ENCODE measurements at regions of chr9 and their contacts with region 1.

Region 1: GRCh38 chr9:114385412-114386181 is 2.2 kb downstream of the AKNA start:
- DNase-seq: peak; percentile 69 to 97 (median 90)
- ATAC-seq: peak; percentile 80 to 84 (median 82)
- H3K4me3 ChIP-seq: peak overlapping the region; percentile 93 to 97
- H3K4me3 Mint-ChIP-seq: peak overlapping the region; percentile 95 to 100 (median 96)
- H3K27ac ChIP-seq: peak overlapping the region; percentile 93
- H3K27ac Mint-ChIP-seq: peak overlapping the region; percentile 99
- H3K4me1 ChIP-seq: peaks cover 54 to 78% of the 10 kb centered on the region in 2 experiments
- H3K4me1 Mint-ChIP-seq: peaks cover 71 to 87% (median 74%) of the 10 kb centered on the region in 3 donors
- H3K27me3 ChIP-seq: no peaks in the 10 kb centered on the region
- H3K27me3 Mint-ChIP-seq: no peaks in the 10 kb centered on the region

Region 2: GRCh38 chr9:114366334-114367128 is 19.1 kb before region 1 on chr9:
- CTCF ChIA-PET with region 1: interaction called, 5 to 40 read pairs
- POLR2A ChIA-PET with region 1: interaction called, 10 to 34 read pairs
- DNase-seq: peak in 25 of 35 experiments; percentile 39 to 84 (median 54)
- ATAC-seq: peak; percentile 60 to 82 (median 63)
- H3K4me3 ChIP-seq: no peak overlapping the region
- H3K4me3 Mint-ChIP-seq: peak overlapping the region; percentile 53 to 77 (median 59)
- H3K27ac ChIP-seq: peak overlapping the region; percentile 96
- H3K27ac Mint-ChIP-seq: peak overlapping the region; percentile 93 to 97
- H3K4me1 ChIP-seq: peaks cover 78 to 95% of the 10 kb centered on the region in 2 experiments
- H3K4me1 Mint-ChIP-seq: peaks cover 82 to 94% (median 89%) of the 10 kb centered on the region in 3 donors
- H3K27me3 ChIP-seq: no peaks in the 10 kb centered on the region
- H3K27me3 Mint-ChIP-seq: no peaks in the 10 kb centered on the region

Region 3: DNA sequence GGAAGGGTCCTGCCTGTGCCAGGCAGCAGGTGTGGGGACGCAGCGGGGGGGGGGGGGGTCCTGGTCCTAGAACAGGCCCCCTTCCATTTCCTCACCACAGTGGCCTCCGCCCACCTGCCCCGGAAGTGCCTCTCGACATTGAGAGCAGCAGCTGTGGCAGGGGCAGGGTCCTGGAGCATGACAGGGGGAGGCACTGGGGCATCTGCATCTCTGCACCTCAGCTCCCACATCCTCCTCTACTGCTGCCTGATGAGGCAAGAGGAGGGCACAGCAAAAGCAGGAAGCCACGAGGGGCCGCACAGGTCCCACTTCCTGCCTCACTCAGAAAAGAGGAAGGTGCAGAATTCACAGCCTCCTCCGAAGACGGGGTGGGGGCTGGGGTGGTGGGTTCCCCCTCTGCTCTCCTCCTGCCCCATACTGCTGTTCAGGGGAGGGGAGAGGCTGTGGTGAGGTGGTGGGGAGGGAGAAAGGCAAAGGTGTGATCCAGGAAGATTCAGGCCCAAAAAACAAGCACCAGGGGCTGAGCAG is 12.6 kb before region 1 on chr9:
- CTCF ChIA-PET with region 1: interaction called, 6 to 40 read pairs
- POLR2A ChIA-PET with region 1: interaction called, 6 to 34 read pairs
- DNase-seq: peak; percentile 68 to 96 (median 89)
- ATAC-seq: peak; percentile 90 to 93 (median 91)
- H3K4me3 ChIP-seq: peak overlapping the region in 1 of 2 donors; percentile 38
- H3K4me3 Mint-ChIP-seq: peak overlapping the region; percentile 74 to 79 (median 75)
- H3K27ac ChIP-seq: peak overlapping the region; percentile 96
- H3K27ac Mint-ChIP-seq: peak overlapping the region; percentile 86 to 96
- H3K4me1 ChIP-seq: peaks cover 84 to 99% of the 10 kb centered on the region in 2 experiments
- H3K4me1 Mint-ChIP-seq: peaks cover 88 to 93% (median 92%) of the 10 kb centered on the region in 3 donors
- H3K27me3 ChIP-seq: no peaks in the 10 kb centered on the region
- H3K27me3 Mint-ChIP-seq: no peaks in the 10 kb centered on the region

Region 4: DNA sequence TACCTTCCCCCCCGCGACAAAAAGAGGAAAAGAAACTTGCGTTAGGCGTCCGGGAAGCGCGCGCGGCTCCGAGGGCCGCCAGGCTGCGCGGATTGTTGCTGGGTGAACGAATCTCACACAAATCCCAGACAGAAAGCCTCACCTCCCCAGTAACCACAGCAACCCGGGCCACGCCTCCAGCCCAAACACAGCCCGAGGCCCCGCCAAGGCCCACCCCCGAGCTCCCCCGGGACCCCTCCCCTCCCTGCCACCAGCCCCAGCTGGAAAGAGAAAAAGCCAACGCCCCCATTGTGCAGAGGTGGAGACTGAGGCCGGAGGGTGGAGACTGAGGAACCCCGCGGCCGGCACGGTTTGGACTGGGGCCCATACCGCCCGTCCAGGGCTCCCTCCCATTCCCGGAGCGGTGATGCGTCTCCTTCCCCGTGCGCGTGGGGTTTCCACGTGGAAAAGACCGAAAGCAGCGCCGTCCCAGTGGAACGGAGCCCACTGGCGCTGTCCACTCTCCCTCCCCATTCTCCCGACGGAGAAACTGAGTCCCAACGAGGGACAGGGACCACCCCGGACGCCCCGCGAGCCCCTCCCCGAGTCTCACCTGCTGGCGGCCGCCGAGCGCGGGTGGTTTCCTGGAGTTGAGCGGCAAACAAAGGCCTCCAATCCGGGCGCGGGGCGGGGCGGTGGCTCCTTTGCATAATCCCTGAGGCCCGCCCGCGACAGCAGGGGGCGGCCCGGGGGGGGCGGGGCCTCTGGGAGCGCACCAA is 12.4 kb after region 1 on chr9:
- CTCF ChIA-PET with region 1: interaction called, 6 to 8 read pairs
- POLR2A ChIA-PET with region 1: interaction called, 18 to 42 read pairs
- DNase-seq: peak; percentile 86 to 98 (median 95)
- ATAC-seq: peak; percentile 87 to 93 (median 91)
- H3K4me3 ChIP-seq: peak overlapping the region; percentile 85 to 87
- H3K4me3 Mint-ChIP-seq: peak overlapping the region; percentile 92 to 100 (median 95)
- H3K27ac ChIP-seq: peak overlapping the region; percentile 90
- H3K27ac Mint-ChIP-seq: peak overlapping the region; percentile 92 to 97
- H3K4me1 ChIP-seq: peaks cover 25 to 49% of the 10 kb centered on the region in 2 experiments
- H3K4me1 Mint-ChIP-seq: peaks cover 44 to 49% (median 47%) of the 10 kb centered on the region in 3 donors
- H3K27me3 ChIP-seq: no peaks in the 10 kb centered on the region
- H3K27me3 Mint-ChIP-seq: no peaks in the 10 kb centered on the region

Region 5: DNA sequence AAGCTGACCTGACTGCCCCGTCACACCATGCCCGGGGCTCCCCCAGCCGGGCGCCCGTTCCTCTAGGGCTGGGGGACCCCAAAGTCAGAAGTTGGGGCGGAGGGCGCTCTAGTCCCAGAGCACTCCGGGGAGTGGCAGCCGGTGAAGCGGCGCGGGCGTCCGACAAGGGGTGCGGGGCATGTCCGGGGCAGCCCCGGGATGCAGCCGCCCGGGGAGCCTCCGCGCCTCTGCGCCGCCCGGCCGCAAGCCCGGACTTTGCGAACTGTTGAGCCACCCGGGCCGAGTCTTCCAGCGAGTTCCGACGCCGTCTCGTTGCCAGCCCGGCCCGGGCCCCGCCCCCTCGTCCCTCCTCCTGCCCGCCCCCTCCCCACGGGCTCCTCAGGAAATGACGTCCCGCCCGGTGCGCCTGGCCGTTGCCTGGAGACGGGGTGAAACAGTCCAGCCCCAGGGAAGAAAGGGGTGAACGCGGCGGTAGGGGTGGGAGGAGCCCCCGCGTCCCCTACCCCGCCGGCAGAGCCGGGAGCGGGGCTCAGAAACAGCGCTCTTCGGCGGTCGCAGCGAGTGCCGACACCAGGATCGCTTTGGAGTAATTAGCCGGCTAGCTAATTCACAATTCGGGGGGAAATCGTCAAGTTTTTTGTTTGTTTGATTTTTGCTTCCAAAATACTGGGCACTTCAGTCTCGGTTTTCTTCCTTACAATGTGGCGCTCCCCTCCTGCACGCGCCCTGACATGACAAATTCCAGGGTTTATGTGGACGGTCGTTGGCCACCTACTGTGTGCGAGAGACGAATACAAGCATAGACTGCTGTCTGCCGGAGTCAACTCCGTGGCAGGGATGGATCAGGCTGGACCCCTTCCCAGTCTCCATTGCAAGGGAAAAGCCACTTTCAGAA is 119.8 kb after region 1 on chr9 and contains the start of gene WHRN:
- CTCF ChIA-PET with region 1: interaction called in 1 of 2 experiments, 3 read pairs
- POLR2A ChIA-PET with region 1: interaction called in 1 of 2 experiments, 12 read pairs
- DNase-seq: peak; percentile 63 to 95 (median 88)
- ATAC-seq: peak; percentile 83 to 92 (median 86)
- H3K4me3 ChIP-seq: peak within 1 kb of the TSS; percentile 65 to 71
- H3K4me3 Mint-ChIP-seq: peak within 1 kb of the TSS; percentile 79 to 85 (median 80)
- H3K27ac ChIP-seq: peak within 1 kb of the TSS; percentile 55
- H3K27ac Mint-ChIP-seq: peak within 1 kb of the TSS in 1 of 2 donors; percentile 52
- H3K4me1 ChIP-seq: peaks cover 2 to 28% of the 10 kb centered on the region in 2 experiments
- H3K4me1 Mint-ChIP-seq: peaks cover 18 to 40% (median 40%) of the 10 kb centered on the region in 3 donors
- H3K27me3 ChIP-seq: peaks cover 0 to 18% of the 10 kb centered on the region in 2 experiments
- H3K27me3 Mint-ChIP-seq: peaks cover 20 to 27% of the 10 kb centered on the region in 2 donors
- total RNA-seq, gene WHRN: 11.4 to 46.0 (median 13.0) TPM

Region 6: DNA sequence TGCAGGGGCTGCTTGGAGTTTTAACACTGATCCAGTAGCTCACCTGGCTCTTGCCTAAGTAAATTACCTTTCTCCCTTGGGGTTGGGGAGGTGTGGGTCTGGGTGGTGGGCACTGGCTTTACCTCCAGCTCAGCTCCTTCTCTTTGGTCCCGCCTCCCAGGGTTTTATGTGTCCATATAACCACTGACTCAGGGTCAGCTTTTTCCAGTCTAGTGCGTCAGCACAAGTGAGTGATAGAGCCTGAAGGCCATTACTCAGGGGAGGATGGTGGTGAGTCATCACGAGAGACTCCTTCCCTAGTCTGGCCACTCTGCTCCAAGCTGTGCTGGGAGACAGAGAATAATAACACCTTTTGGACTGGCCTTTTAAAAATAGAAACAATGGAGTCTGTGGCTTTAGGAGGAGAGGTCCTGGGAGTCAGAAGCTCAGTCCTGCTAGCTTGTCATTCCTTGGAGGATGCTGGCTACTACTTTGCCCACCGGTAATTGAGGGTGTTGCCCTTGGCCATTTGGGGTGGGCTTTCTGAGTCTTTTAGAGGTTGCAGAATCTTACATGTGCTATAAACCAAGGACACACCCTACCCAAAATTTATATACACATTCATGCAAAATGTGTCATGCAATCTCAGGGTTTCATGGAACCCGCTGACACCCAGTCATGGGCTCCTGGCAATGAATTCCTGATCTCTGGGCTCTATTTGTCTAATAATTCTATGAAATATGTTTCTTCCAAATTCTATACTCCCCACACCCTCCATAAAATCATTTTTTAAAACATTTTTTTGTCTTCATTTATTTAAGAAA is 166.5 kb after region 1 on chr9:
- CTCF ChIA-PET with region 1: no interaction called
- POLR2A ChIA-PET with region 1: no interaction called
- DNase-seq: no peak
- ATAC-seq: no peak
- H3K4me3 ChIP-seq: no peak overlapping the region
- H3K4me3 Mint-ChIP-seq: no peak overlapping the region
- H3K27ac ChIP-seq: no peak overlapping the region
- H3K27ac Mint-ChIP-seq: no peak overlapping the region
- H3K4me1 ChIP-seq: no peaks in the 10 kb centered on the region
- H3K4me1 Mint-ChIP-seq: no peaks in the 10 kb centered on the region
- H3K27me3 ChIP-seq: peaks cover 0 to 21% of the 10 kb centered on the region in 2 experiments
- H3K27me3 Mint-ChIP-seq: peaks cover 3 to 9% of the 10 kb centered on the region in 2 donors